ENCODE measurements at regions of chr11 and their contacts with region 1.

Region 1: DNA sequence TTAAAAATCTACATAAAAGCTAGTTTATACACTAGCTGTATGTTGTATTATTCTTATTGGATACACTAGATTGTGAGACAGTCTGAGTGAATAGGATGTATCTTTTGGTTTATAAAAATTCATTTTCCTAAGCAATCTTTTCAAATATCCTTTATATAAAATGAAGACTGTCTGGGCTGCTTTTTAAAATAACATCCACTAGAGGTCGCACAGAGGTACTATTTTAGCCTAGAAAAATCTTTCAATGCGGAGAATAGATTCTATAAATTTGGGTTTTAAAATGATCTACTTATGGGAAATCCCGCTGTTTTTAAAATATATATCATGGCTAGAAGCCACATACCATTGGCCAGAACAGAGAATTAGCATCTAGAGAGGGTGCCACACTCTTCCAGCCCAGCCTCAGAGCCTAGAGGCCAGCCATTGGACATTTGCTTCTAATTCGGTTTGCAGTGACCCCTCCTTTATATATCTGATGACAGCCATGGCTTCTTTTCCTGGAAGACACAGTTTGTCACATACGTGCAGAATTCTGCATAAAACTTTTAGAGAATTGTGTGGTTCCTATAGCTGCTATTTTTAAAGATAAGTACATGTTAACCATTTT is 7.3 kb downstream of the C11orf97 start:
- DNase-seq: no peak
- ATAC-seq: no peak
- H3K4me3 ChIP-seq: no peak overlapping the region
- H3K27ac ChIP-seq: no peak overlapping the region
- H3K4me1 ChIP-seq: no peaks in the 10 kb centered on the region
- H3K27me3 ChIP-seq: no peaks in the 10 kb centered on the region

Region 2: GRCh38 chr11:94563176-94563847 is 43.7 kb after region 1 on chr11:
- intact Hi-C with region 1: loop called (anchors 2 to 5 kb)
- DNase-seq: no peak
- ATAC-seq: peak; percentile 92
- H3K4me3 ChIP-seq: no peak overlapping the region
- H3K27ac ChIP-seq: no peak overlapping the region
- H3K4me1 ChIP-seq: peaks cover 0 to 5% of the 10 kb centered on the region in 2 donors
- H3K27me3 ChIP-seq: no peaks in the 10 kb centered on the region

Region 3: DNA sequence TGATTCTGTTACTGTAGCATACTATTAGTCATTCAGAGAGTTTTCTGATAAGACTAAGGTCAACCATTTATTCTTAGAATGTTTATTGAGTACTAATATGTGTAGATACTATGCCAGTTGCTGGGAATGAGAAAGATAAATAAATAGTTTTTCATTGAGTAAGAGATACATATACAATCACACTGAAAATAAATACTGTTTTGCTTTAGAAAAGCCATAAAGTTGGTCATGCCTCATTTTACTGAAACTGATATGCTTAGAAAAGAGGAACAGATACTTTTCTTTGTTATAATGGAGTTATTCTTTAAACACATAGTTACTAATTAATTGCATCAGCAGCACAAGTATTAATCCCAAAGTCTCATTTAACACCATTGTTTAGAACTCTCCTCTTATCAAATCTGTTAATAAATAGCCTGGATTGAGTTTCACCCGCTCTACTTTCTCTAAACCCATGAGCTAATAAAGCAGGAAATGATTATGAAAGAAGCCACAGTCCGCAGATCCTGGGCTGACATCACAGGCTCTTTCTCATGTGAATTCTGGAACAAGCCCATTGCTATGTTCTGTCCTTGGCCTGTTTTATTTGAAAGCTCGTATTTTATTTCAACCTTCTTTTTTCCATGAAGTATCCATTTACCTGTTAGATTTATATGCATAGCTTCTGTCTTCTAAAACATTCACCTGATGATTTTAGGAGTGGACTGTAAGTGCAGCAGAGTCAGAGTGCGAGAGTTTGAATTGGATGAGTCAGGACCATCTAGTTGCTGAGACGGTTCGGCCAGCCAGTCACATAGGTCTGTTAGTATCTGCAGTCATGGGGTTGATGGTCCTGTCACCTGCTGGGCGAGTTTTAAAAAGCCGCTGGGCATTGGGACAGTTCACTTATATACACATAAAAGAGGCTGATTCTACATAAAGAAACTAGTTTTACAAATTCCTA is 83.1 kb after region 1 on chr11:
- intact Hi-C with region 1: loop called in 1 of 2 experiments (anchors 5 kb)
- DNase-seq: peak; percentile 82 to 84
- ATAC-seq: no peak
- H3K4me3 ChIP-seq: no peak overlapping the region
- H3K27ac ChIP-seq: no peak overlapping the region
- H3K4me1 ChIP-seq: no peaks in the 10 kb centered on the region
- H3K27me3 ChIP-seq: no peaks in the 10 kb centered on the region